Activated CD4-positive, alpha-beta memory T cell treated with anti-CD3 and anti-CD28 coated beads, Interleukin-2, amount 10 ng/mL, durations not matched to agents 7 days and 5 days (primary cell): ENCODE measurements at regions of chr9 and their contacts with region 1.

Region 1: GRCh38 chr9:35696525-35697215 is 6.9 kb upstream of the TPM2 start:
- DNase-seq: peak; percentile 60
- H3K4me3 Mint-ChIP-seq: no peak overlapping the region
- H3K27ac Mint-ChIP-seq: no peak overlapping the region
- H3K4me1 Mint-ChIP-seq: peaks cover 4% of the 10 kb centered on the region
- H3K27me3 Mint-ChIP-seq: no peaks in the 10 kb centered on the region

Region 2: DNA sequence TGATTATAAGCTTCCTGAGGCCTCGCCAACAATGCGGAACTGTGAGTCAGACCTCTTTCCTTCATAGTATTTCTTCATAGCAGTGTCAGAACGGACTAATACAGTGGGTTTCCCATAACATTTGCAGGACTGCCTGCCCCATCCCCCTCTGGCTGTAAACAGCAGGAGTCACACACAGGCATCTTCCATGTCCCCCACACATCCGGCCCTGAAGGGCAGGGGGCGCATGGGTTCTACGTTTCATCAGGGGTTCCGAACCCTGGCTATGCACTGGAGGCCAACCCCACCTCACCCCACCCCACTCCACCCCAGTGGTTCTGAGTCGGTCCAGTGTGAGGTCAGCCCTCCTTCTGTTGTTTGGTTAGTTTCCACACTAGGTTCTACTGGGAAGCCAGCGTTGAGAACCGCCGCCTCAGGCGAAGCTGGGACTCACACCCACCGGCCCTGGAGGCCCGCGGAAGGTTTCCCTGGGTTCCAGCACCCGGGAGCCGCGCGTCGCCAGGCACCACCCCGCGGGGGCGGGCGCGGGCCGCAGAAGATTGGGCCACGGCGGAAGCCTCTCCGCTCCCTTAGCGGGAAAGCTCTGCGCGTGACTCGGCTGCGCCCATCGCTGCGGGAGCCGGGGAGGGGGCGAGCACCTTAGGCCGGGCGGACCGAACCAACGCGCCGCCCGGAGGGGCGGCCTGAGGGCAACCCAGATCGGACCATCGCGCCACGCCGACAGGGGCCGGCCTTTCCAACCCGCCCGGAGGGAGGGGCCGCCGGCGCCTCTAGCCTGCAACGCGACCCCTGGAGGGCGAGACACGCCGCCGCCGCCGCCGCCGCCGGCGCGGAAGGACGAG is 207.1 kb before region 1 on chr9 and contains the start of gene RUSC2:
- CTCF ChIA-PET with region 1: no interaction called
- POLR2A ChIA-PET with region 1: no interaction called
- DNase-seq: peak; percentile 47
- H3K4me3 Mint-ChIP-seq: peak within 1 kb of the TSS; percentile 71
- H3K27ac Mint-ChIP-seq: no peak within 1 kb of the TSS
- H3K4me1 Mint-ChIP-seq: peaks cover 24% of the 10 kb centered on the region
- H3K27me3 Mint-ChIP-seq: peaks cover 31% of the 10 kb centered on the region
- total RNA-seq, gene RUSC2: 1.2 to 1.4 TPM

Region 3: DNA sequence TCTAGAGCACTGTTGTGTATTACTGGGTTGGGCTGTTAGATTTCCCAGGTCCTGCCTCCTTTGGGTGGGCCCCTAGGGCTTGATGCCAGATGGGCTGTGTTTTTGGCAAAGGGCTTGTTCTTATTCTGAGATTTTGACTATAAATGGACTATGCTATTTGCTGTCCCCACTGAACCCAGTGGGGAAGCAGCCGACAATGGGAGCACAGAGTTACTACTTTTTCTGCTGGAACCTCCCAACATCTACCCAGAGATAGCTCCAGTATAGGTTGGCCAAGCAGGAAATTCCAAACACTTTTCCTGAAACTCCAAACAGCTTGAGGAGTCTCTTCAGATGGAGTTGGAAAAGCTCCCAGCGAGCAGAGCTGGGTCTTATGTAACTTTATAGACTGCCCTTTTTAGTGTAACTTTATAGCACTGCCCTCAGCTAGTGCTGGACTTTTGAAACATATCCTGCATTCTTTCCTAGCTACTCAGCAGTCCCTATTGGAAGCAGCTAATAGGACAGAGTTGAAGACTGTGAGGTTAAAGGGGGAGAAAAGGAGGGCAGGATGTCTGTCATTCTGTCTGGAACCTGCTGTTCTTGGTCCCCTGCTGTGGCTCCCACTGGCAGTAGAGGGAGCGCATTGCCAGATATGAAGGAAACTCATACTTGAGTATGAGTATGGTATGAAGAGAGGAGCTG is 185.8 kb before region 1 on chr9:
- CTCF ChIA-PET with region 1: no interaction called
- POLR2A ChIA-PET with region 1: no interaction called
- DNase-seq: no peak
- H3K4me3 Mint-ChIP-seq: no peak overlapping the region
- H3K27ac Mint-ChIP-seq: no peak overlapping the region
- H3K4me1 Mint-ChIP-seq: peaks cover 2% of the 10 kb centered on the region
- H3K27me3 Mint-ChIP-seq: peaks cover 7% of the 10 kb centered on the region

Region 4: DNA sequence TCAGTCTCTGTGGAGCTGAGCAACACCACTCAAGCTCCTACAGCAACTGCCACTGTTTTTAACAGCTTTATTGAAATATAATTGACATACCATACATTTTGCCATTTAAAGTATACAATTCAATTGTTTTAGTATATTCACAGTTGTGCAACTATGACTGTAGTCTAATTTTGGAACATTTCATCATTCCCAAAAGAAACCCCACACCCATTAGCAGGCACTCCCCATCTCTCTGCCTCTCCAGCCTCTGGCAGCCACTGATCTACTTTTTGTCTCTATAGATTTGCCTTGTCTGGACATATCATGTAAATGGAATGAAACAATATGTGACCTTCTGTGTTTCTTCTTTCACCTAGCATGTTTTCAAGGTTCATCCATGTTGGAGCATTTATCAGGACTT is 163.3 kb before region 1 on chr9:
- CTCF ChIA-PET with region 1: no interaction called
- POLR2A ChIA-PET with region 1: no interaction called
- DNase-seq: no peak
- H3K4me3 Mint-ChIP-seq: no peak overlapping the region
- H3K27ac Mint-ChIP-seq: no peak overlapping the region
- H3K4me1 Mint-ChIP-seq: peaks cover 4% of the 10 kb centered on the region
- H3K27me3 Mint-ChIP-seq: peaks cover 2% of the 10 kb centered on the region

Region 5: GRCh38 chr9:35603987-35604577 is 92.6 kb before region 1 on chr9:
- CTCF ChIA-PET with region 1: interaction called, 16 read pairs
- POLR2A ChIA-PET with region 1: interaction called, 6 read pairs
- DNase-seq: peak; percentile 100
- H3K4me3 Mint-ChIP-seq: peak overlapping the region; percentile 96
- H3K27ac Mint-ChIP-seq: peak overlapping the region; percentile 99
- H3K4me1 Mint-ChIP-seq: peaks cover 30% of the 10 kb centered on the region
- H3K27me3 Mint-ChIP-seq: no peaks in the 10 kb centered on the region

Region 6: GRCh38 chr9:35646533-35647265 is 50.0 kb before region 1 on chr9:
- CTCF ChIA-PET with region 1: interaction called, 38 read pairs
- POLR2A ChIA-PET with region 1: interaction called, 24 read pairs
- DNase-seq: peak; percentile 93
- H3K4me3 Mint-ChIP-seq: peak overlapping the region; percentile 88
- H3K27ac Mint-ChIP-seq: peak overlapping the region; percentile 92
- H3K4me1 Mint-ChIP-seq: peaks cover 51% of the 10 kb centered on the region
- H3K27me3 Mint-ChIP-seq: no peaks in the 10 kb centered on the region

Region 7: DNA sequence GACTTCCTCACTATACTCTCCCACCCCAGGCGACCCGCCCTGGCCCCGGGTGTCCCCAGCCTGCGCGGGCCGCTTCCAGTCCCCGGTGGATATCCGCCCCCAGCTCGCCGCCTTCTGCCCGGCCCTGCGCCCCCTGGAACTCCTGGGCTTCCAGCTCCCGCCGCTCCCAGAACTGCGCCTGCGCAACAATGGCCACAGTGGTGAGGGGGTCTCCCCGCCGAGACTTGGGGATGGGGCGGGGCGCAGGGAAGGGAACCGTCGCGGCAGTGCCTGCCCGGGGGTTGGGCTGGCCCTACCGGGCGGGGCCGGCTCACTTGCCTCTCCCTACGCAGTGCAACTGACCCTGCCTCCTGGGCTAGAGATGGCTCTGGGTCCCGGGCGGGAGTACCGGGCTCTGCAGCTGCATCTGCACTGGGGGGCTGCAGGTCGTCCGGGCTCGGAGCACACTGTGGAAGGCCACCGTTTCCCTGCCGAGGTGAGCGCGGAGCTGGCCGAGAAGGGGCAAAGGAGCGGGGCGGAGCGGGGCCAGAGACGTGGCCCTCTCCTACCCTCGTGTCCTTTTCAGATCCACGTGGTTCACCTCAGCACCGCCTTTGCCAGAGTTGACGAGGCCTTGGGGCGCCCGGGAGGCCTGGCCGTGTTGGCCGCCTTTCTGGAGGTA is 20.8 kb before region 1 on chr9:
- CTCF ChIA-PET with region 1: interaction called, 18 read pairs
- POLR2A ChIA-PET with region 1: interaction called, 4 read pairs
- DNase-seq: no peak
- H3K4me3 Mint-ChIP-seq: no peak overlapping the region
- H3K27ac Mint-ChIP-seq: no peak overlapping the region
- H3K4me1 Mint-ChIP-seq: peaks cover 10% of the 10 kb centered on the region
- H3K27me3 Mint-ChIP-seq: peaks cover 32% of the 10 kb centered on the region

Region 8: GRCh38 chr9:35718721-35719511 is 22.2 kb after region 1 on chr9:
- CTCF ChIA-PET with region 1: interaction called, 18 read pairs
- POLR2A ChIA-PET with region 1: interaction called, 3 read pairs
- DNase-seq: no peak
- H3K4me3 Mint-ChIP-seq: no peak overlapping the region
- H3K27ac Mint-ChIP-seq: no peak overlapping the region
- H3K4me1 Mint-ChIP-seq: no peaks in the 10 kb centered on the region
- H3K27me3 Mint-ChIP-seq: no peaks in the 10 kb centered on the region

Region 9: GRCh38 chr9:35896570-35896969 is 199.9 kb after region 1 on chr9:
- CTCF ChIA-PET with region 1: no interaction called
- POLR2A ChIA-PET with region 1: no interaction called
- DNase-seq: no peak
- H3K4me3 Mint-ChIP-seq: no peak overlapping the region
- H3K27ac Mint-ChIP-seq: no peak overlapping the region
- H3K4me1 Mint-ChIP-seq: no peaks in the 10 kb centered on the region
- H3K27me3 Mint-ChIP-seq: peaks cover 22% of the 10 kb centered on the region